ENCODE measurements at regions of chr14 and their contacts with region 1.

Region 1: DNA sequence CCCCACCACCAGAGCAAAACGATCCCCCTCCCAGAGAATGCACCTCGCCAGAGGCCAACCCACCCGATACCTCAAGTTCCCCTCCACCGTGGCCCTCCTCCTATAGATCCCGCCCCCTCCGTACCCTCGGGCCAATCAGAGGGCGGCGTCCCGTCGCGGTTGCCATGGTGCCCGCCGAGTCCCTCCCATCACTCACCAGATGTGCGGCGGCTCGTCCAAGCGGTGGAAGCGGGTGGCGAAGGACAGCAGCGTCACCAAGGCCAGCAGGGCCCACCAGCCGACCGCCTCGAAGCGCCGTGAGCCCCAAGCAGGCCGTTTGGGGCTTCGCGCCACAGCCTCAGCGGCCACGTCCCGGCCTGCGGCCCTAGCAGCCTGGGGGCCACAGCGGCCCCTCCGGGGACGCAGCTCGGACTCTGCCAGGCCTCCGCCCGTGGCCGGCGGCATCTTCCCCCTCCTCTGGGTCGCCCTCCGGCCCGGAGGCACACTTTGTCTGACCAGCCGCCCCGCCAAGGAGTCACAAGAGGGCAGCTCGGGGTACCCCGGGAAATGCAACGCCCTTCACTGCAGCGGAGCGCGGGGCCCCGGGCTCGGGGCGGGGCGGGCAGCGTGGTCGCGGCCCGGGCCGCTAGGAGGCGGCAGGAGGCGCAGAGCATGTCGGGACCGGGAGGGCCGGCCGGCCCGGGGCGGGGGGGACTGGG is at the start of gene POMT2:
- DNase-seq: peak; percentile 90 to 93 (median 91)
- H3K4me3 ChIP-seq: peak within 1 kb of the TSS; percentile 83 to 90
- H3K4me3 Mint-ChIP-seq: peak within 1 kb of the TSS; percentile 96 to 100 (median 99)
- H3K27ac ChIP-seq: peak within 1 kb of the TSS; percentile 93
- H3K27ac Mint-ChIP-seq: peak within 1 kb of the TSS; percentile 99 to 100 (median 99)
- H3K4me1 ChIP-seq: peaks cover 12% of the 10 kb centered on the region
- H3K4me1 Mint-ChIP-seq: peaks cover 8 to 27% (median 14%) of the 10 kb centered on the region in 4 donors
- H3K27me3 ChIP-seq: no peaks in the 10 kb centered on the region
- H3K27me3 Mint-ChIP-seq: no peaks in the 10 kb centered on the region
- total RNA-seq, gene POMT2: 13.2 to 15.2 TPM

Region 2: GRCh38 chr14:76151398-76152339 is 1168.7 kb before region 1 on chr14 and contains the start of gene GPATCH2L:
- CTCF ChIA-PET with region 1: no interaction called
- POLR2A ChIA-PET with region 1: no interaction called
- intact Hi-C with region 1: loop called (anchors 5 kb)
- DNase-seq: peak; percentile 94 to 97 (median 96)
- H3K4me3 ChIP-seq: peak within 1 kb of the TSS; percentile 85 to 88
- H3K4me3 Mint-ChIP-seq: peak within 1 kb of the TSS; percentile 92 to 99 (median 96)
- H3K27ac ChIP-seq: peak within 1 kb of the TSS; percentile 94
- H3K27ac Mint-ChIP-seq: peak within 1 kb of the TSS; percentile 93 to 99 (median 97)
- H3K4me1 ChIP-seq: peaks cover 51% of the 10 kb centered on the region
- H3K4me1 Mint-ChIP-seq: peaks cover 37 to 59% (median 49%) of the 10 kb centered on the region in 4 donors
- H3K27me3 ChIP-seq: no peaks in the 10 kb centered on the region
- H3K27me3 Mint-ChIP-seq: no peaks in the 10 kb centered on the region
- total RNA-seq, gene GPATCH2L: 66.0 to 70.1 TPM

Region 3: GRCh38 chr14:76956316-76957090 is 363.9 kb before region 1 on chr14:
- CTCF ChIA-PET with region 1: no interaction called
- POLR2A ChIA-PET with region 1: interaction called, 3 read pairs
- intact Hi-C with region 1: loop called (anchors 2 kb)
- DNase-seq: peak; percentile 83 to 97 (median 85)
- H3K4me3 ChIP-seq: peak overlapping the region; percentile 61 to 64
- H3K4me3 Mint-ChIP-seq: peak overlapping the region; percentile 81 to 96 (median 88)
- H3K27ac ChIP-seq: peak overlapping the region; percentile 94
- H3K27ac Mint-ChIP-seq: peak overlapping the region; percentile 87 to 99 (median 98)
- H3K4me1 ChIP-seq: peaks cover 72% of the 10 kb centered on the region
- H3K4me1 Mint-ChIP-seq: peaks cover 37 to 75% (median 53%) of the 10 kb centered on the region in 4 donors
- H3K27me3 ChIP-seq: no peaks in the 10 kb centered on the region
- H3K27me3 Mint-ChIP-seq: no peaks in the 10 kb centered on the region

Region 4: DNA sequence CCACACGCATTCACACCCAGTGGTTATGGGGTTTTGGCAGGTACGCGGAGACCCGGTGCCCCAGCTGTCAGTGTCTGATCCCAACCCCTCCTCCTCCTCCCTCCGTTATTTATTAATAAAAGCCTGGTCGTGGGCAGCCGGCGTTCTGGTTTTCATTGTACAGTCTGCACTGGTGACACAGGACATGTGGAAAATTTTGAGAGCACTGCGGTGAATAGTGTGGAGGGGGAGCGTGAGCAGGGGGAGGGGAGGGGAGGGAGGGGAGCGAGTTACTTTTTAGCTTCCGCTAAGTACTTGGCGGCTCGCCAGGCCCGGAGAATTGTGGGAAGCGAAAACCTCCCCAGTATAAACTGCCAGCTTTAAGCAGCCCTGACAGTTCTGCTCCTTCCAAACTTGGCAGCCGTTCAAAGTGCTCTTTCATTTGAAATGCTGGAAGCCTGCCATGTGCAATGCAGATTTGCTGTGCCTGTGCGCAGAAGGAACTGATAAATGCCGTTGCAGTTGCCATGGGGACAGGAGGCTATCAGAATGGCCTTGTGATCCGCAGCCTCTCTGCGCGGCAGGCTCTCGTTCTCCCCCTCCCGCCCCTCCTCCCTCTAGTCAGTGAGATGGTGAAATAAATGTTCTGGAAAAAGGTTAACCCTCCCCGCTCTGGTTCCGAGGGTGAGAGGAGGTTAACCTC is 280.2 kb before region 1 on chr14:
- CTCF ChIA-PET with region 1: no interaction called
- POLR2A ChIA-PET with region 1: interaction called, 3 read pairs
- intact Hi-C with region 1: loop called (anchors 5 kb)
- DNase-seq: peak; percentile 96 to 99 (median 99)
- H3K4me3 ChIP-seq: peak overlapping the region; percentile 8 to 53
- H3K4me3 Mint-ChIP-seq: peak overlapping the region; percentile 84 to 93 (median 86)
- H3K27ac ChIP-seq: peak overlapping the region; percentile 95
- H3K27ac Mint-ChIP-seq: peak overlapping the region; percentile 97 to 100 (median 99)
- H3K4me1 ChIP-seq: peaks cover 94% of the 10 kb centered on the region
- H3K4me1 Mint-ChIP-seq: peaks cover 50 to 97% (median 84%) of the 10 kb centered on the region in 4 donors
- H3K27me3 ChIP-seq: no peaks in the 10 kb centered on the region
- H3K27me3 Mint-ChIP-seq: no peaks in the 10 kb centered on the region

Region 5: GRCh38 chr14:77376771-77377501 is 56.5 kb after region 1 on chr14 and contains the starts of genes SAMD15 and TMED8:
- CTCF ChIA-PET with region 1: interaction called, 11 read pairs
- POLR2A ChIA-PET with region 1: interaction called, 29 read pairs
- intact Hi-C with region 1: loop called (anchors 1 kb)
- DNase-seq: peak; percentile 81 to 87 (median 87)
- H3K4me3 ChIP-seq: peak within 1 kb of the TSS; percentile 94 to 97
- H3K4me3 Mint-ChIP-seq: peak within 1 kb of the TSS; percentile 85 to 94 (median 90)
- H3K27ac ChIP-seq: peak within 1 kb of the TSS; percentile 74
- H3K27ac Mint-ChIP-seq: peak within 1 kb of the TSS in 6 of 7 donors; percentile 84 to 95 (median 92)
- H3K4me1 ChIP-seq: peaks cover 46% of the 10 kb centered on the region
- H3K4me1 Mint-ChIP-seq: peaks cover 30 to 42% (median 36%) of the 10 kb centered on the region in 4 donors
- H3K27me3 ChIP-seq: no peaks in the 10 kb centered on the region
- H3K27me3 Mint-ChIP-seq: no peaks in the 10 kb centered on the region
- total RNA-seq, gene SAMD15: 0.11 to 0.38 TPM
- total RNA-seq, gene TMED8: 8.3 to 8.6 TPM

Region 6: GRCh38 chr14:77498120-77498979 is 178.0 kb after region 1 on chr14 and contains the start of gene ISM2:
- CTCF ChIA-PET with region 1: no interaction called
- POLR2A ChIA-PET with region 1: no interaction called
- intact Hi-C with region 1: no loop called
- DNase-seq: peak; percentile 14 to 48 (median 26)
- H3K4me3 ChIP-seq: no peak within 1 kb of the TSS
- H3K4me3 Mint-ChIP-seq: peak within 1 kb of the TSS; percentile 75 to 88 (median 79)
- H3K27ac ChIP-seq: no peak within 1 kb of the TSS
- H3K27ac Mint-ChIP-seq: peak within 1 kb of the TSS in 1 of 7 donors; percentile 52
- H3K4me1 ChIP-seq: peaks cover 8% of the 10 kb centered on the region
- H3K4me1 Mint-ChIP-seq: peaks cover 3 to 18% (median 7%) of the 10 kb centered on the region in 4 donors
- H3K27me3 ChIP-seq: peaks cover 6% of the 10 kb centered on the region
- H3K27me3 Mint-ChIP-seq: peaks cover 19 to 25% of the 10 kb centered on the region in 2 donors
- total RNA-seq, gene ISM2: not detected

Region 7: DNA sequence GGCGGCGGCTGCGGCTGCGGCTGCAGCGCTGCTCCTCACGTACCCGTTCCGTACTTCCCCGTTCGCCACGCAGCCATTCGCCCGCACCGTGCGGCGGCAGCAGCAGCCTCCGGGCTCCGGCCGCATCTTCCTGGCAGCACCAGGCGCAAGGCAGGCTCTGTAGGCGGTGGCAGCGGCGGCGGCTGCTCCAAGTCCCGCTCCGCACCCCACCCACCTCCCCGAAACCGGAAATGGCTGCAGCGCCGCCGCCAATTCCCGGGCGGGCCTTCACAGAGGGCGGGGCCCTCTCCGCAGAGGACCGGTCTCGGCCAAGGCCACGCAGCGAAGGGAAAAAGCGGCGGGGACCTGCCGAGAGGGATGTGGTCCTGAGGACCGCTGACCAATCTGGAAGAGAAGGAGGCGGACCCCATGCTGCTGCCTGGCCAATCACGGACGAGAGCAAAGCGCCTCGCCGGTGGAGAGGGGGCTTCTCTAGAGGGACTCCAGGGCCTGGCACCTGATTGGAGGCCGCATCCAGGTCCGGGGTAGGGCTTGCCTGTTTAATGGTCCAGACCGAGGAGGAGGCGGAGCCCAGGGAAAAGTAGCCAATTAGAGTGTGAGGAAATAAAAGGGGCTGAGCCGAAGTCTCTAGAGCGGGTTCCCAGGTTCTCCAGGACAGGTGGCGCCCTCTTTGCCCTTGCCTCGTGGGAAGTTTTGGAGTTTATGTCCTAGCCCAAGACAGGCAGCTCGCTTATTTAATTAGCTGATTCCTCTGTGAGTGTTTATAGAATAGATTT is 296.3 kb after region 1 on chr14 and contains the start of gene SPTLC2:
- CTCF ChIA-PET with region 1: no interaction called
- POLR2A ChIA-PET with region 1: interaction called, 3 read pairs
- intact Hi-C with region 1: loop called (anchors 2 kb)
- DNase-seq: peak; percentile 95 to 99 (median 97)
- H3K4me3 ChIP-seq: peak within 1 kb of the TSS; percentile 50 to 59
- H3K4me3 Mint-ChIP-seq: peak within 1 kb of the TSS; percentile 88 to 98 (median 92)
- H3K27ac ChIP-seq: peak within 1 kb of the TSS; percentile 68
- H3K27ac Mint-ChIP-seq: peak within 1 kb of the TSS; percentile 86 to 96 (median 92)
- H3K4me1 ChIP-seq: peaks cover 44% of the 10 kb centered on the region
- H3K4me1 Mint-ChIP-seq: peaks cover 29 to 52% (median 38%) of the 10 kb centered on the region in 4 donors
- H3K27me3 ChIP-seq: no peaks in the 10 kb centered on the region
- H3K27me3 Mint-ChIP-seq: no peaks in the 10 kb centered on the region
- total RNA-seq, gene SPTLC2: 25.9 to 31.3 TPM

Region 8: GRCh38 chr14:77799863-77800730 is 479.7 kb after region 1 on chr14 and contains the start of gene ADCK1:
- CTCF ChIA-PET with region 1: no interaction called
- POLR2A ChIA-PET with region 1: no interaction called
- intact Hi-C with region 1: loop called (anchors 1 kb)
- DNase-seq: peak; percentile 83 to 88 (median 85)
- H3K4me3 ChIP-seq: peak within 1 kb of the TSS; percentile 83 to 87
- H3K4me3 Mint-ChIP-seq: peak within 1 kb of the TSS; percentile 83 to 90 (median 86)
- H3K27ac ChIP-seq: peak within 1 kb of the TSS; percentile 71
- H3K27ac Mint-ChIP-seq: peak within 1 kb of the TSS; percentile 77 to 93 (median 91)
- H3K4me1 ChIP-seq: peaks cover 7% of the 10 kb centered on the region
- H3K4me1 Mint-ChIP-seq: peaks cover 2 to 11% (median 9%) of the 10 kb centered on the region in 4 donors
- H3K27me3 ChIP-seq: no peaks in the 10 kb centered on the region
- H3K27me3 Mint-ChIP-seq: no peaks in the 10 kb centered on the region
- total RNA-seq, gene ADCK1: 5.3 to 5.6 TPM